ENCODE measurements at regions of chr15 and their contacts with region 1.

Region 1: DNA sequence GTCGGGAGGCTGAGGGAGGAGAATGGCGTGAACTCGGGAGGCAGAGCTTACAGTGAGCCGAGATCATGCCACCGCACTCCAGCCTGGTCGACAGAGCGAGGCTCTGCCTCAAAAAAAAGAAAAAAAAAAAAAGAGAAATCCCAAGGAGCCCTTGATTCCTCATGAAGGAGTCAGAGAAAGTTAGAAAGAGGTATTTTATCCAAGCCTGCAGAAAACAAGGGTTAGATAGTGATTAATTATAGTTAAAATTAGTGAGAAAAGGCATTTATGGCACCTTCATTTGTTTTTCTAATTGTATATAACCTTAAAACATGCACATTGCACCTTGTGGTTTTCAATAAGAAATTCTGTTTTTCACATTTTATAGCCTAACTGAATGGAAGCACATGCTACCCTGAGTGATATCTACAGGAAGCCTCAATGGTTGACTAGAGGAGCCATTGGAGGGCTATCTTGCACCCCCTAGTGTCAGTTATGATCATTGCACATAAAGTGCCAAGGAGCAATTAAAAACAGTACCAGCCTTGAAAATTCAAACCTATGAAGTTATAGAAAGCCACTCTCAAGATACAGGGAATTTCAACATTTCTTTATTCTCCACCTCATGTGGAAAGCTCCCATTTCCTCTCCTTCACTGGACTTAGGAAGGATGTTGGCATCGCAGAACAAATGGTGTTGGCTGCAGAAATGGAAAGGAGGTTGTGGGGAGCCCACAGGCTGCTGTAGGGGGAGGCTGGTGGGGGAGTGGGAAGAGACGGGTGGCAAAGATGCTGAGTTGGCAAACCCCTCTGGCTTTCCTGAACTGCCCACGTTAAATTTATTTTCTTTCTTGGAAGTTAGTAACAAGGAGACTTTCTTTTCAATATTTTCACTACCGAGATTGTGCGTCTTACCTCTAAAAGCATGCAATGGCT is 48.5 kb downstream of the ITGA11 start:
- DNase-seq: peak in 1 of 6 donors; percentile 28
- ATAC-seq: peak in 3 of 4 donors; percentile 71 to 88 (median 79)
- H3K4me3 ChIP-seq: no peak overlapping the region
- H3K27ac ChIP-seq: no peak overlapping the region
- H3K4me1 ChIP-seq: no peaks in the 10 kb centered on the region
- H3K27me3 ChIP-seq: no peaks in the 10 kb centered on the region
- CTCF ChIP-seq: peak; percentile 46 to 62 (median 52)

Region 2: GRCh38 chr15:68187559-68187958 is 195.9 kb before region 1 on chr15:
- intact Hi-C with region 1: no loop called
- DNase-seq: peak in 4 of 6 donors; percentile 57 to 85 (median 74)
- ATAC-seq: peak; percentile 91 to 93 (median 92)
- H3K4me3 ChIP-seq: peak overlapping the region in 1 of 4 donors; percentile 12
- H3K27ac ChIP-seq: peak overlapping the region; percentile 40 to 54 (median 50)
- H3K4me1 ChIP-seq: peaks cover 0 to 23% (median 22%) of the 10 kb centered on the region in 3 donors
- H3K27me3 ChIP-seq: no peaks in the 10 kb centered on the region
- CTCF ChIP-seq: no peak

Region 3: GRCh38 chr15:68252925-68253534 is 130.4 kb before region 1 on chr15:
- intact Hi-C with region 1: loop called in 1 of 3 experiments (anchors 10 kb)
- DNase-seq: peak in 1 of 6 donors; percentile 47
- ATAC-seq: peak; percentile 53 to 77 (median 72)
- H3K4me3 ChIP-seq: no peak overlapping the region
- H3K27ac ChIP-seq: no peak overlapping the region
- H3K4me1 ChIP-seq: no peaks in the 10 kb centered on the region
- H3K27me3 ChIP-seq: no peaks in the 10 kb centered on the region
- CTCF ChIP-seq: peak; percentile 55 to 72 (median 68)

Region 4: DNA sequence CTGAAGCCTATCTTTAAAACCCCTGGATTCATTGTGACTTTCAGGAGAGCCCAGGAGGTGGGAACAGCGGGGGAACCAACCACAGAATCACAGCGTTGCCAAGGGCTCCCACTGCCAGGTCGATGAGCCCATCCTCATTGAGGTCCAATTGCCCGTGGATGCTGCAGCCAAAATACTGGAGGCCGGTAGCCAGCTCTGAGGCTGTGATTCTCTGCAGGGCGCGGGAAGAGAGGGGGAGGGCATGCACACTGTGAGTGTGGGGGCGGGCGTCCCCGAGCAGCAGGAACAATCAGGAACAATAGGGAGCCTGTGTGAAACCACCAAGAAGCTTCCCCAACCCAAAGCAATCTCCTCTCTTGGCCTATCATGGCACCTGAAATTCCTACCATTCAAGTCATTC is 52.5 kb before region 1 on chr15:
- intact Hi-C with region 1: no loop called
- DNase-seq: no peak
- ATAC-seq: no peak
- H3K4me3 ChIP-seq: no peak overlapping the region
- H3K27ac ChIP-seq: no peak overlapping the region
- H3K4me1 ChIP-seq: no peaks in the 10 kb centered on the region
- H3K27me3 ChIP-seq: no peaks in the 10 kb centered on the region
- CTCF ChIP-seq: no peak

Region 5: GRCh38 chr15:69126054-69126469 is 742.6 kb after region 1 on chr15:
- intact Hi-C with region 1: no loop called
- DNase-seq: no peak
- ATAC-seq: peak in 3 of 4 donors; percentile 67 to 83 (median 68)
- H3K4me3 ChIP-seq: no peak overlapping the region
- H3K27ac ChIP-seq: peak overlapping the region in 2 of 4 donors; percentile 41 to 52
- H3K4me1 ChIP-seq: no peaks in the 10 kb centered on the region
- H3K27me3 ChIP-seq: no peaks in the 10 kb centered on the region
- CTCF ChIP-seq: no peak